ENCODE measurements at regions of chr2 and their contacts with region 1.

Region 1: DNA sequence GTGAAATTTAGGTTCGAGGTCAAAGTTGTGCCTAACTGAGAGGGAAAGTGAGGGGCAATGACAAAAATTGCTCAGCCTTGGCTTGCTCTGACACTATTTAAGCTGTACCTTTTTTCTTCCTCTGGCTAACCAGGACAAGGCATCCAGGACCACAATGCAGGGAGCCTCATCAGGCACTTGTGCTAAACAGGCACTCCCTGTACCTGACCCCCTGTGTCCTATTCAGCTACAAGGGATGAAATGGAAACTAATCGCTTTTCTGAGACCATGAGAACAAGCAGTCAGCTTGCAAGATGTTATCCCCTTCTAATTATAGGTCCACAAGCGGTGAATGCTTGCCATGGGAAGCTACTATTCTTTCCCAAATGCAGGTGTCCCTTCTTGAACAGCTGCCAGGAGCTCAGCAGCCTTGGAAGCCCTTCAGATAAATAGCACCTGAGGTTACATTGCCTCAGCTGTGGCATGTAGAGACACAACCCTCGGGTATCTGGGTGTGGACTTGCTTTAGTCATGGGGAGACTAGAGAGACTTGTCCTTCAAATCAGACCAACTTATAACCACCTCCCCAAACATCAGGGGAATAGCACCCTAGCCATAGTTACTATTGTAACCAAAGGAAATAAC is 19.1 kb upstream of the ITGA6 start:
- DNase-seq: no peak
- H3K4me3 ChIP-seq: no peak overlapping the region
- H3K27ac ChIP-seq: no peak overlapping the region
- H3K4me1 ChIP-seq: no peaks in the 10 kb centered on the region
- H3K27me3 ChIP-seq: no peaks in the 10 kb centered on the region
- CTCF ChIP-seq: no peak
- EP300 ChIP-seq: no peak
- POLR2A ChIP-seq: no peak
- RAD21 ChIP-seq: no peak

Region 2: DNA sequence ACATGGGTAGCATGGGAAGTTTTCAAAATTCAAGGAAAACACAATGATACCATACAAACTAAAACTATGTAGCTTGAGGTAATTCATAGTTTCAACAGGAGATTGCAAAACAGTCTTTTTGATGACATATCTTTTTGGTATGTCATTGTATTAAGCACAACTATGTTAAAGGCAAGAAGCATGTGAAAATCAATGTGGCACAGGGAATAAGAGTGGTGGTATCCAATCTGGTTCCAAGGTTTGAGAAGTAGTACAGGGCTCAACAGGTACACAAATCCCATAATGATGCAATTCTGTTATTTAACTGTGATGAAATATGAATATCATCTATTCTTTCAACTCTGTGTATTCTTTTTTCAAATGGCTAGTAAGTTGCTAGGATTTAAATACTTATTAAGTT is 289.2 kb before region 1 on chr2:
- CTCF ChIA-PET with region 1: no interaction called
- POLR2A ChIA-PET with region 1: no interaction called
- DNase-seq: no peak
- H3K4me3 ChIP-seq: no peak overlapping the region
- H3K27ac ChIP-seq: no peak overlapping the region
- H3K4me1 ChIP-seq: no peaks in the 10 kb centered on the region
- H3K27me3 ChIP-seq: no peaks in the 10 kb centered on the region; a peak in 1 of 7 replicates
- CTCF ChIP-seq: no peak
- EP300 ChIP-seq: no peak
- POLR2A ChIP-seq: no peak
- RAD21 ChIP-seq: no peak

Region 3: DNA sequence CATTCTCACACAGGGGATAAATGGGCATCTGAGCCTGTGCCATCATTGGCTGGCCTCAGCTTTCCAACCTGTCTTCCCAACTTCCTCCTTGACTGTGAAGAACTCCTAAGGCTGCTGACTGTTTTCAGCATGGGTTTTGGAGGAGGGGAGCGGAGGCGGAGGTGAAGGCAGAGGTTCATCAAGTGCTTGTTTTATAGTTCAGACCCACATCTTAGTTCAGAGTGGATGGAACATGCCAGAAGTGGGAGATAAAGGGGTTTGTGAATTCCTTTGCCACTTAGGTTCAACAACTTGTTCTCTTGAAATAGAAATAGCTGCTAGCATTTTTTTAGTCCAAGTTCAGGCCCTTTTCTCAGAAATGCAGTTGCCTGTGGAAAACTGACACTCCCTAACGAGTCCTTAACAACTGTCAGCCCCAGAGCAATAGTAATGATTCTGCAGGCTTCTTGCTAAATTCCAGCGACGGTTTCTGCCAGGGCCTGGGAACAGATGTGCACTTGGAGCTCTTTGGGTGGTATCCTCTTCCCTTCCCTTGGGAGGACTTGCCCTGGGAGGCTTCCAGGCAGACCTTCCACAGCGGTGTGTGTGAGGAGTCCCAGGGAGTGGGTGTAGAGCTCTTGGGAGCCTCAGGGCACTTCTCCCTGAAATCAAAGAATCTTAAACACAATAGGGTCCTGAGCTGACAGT is 11.0 kb before region 1 on chr2:
- CTCF ChIA-PET with region 1: interaction called, 18 read pairs
- POLR2A ChIA-PET with region 1: no interaction called
- DNase-seq: no peak
- H3K4me3 ChIP-seq: no peak overlapping the region
- H3K27ac ChIP-seq: no peak overlapping the region
- H3K4me1 ChIP-seq: no peaks in the 10 kb centered on the region
- H3K27me3 ChIP-seq: no peaks in the 10 kb centered on the region
- CTCF ChIP-seq: no peak
- EP300 ChIP-seq: no peak
- POLR2A ChIP-seq: no peak
- RAD21 ChIP-seq: no peak